HEK293 (cell line): ENCODE measurements at regions of chr2 and their contacts with region 1.

Region 1: GRCh38 chr2:177164584-177165052 is 48.0 kb upstream of the HNRNPA3 start:
- H3K4me3 ChIP-seq: peak overlapping the region; percentile 0; the same call in 1 of the 2 replicates
- H3K27ac ChIP-seq: no peak overlapping the region
- H3K4me1 ChIP-seq: peaks cover 9% of the 10 kb centered on the region
- CTCF ChIP-seq: peak; percentile 96

Region 2: GRCh38 chr2:177044671-177045070 is 119.9 kb before region 1 on chr2:
- CTCF ChIA-PET with region 1: no interaction called
- POLR2A ChIA-PET with region 1: no interaction called
- H3K4me3 ChIP-seq: no peak overlapping the region
- H3K27ac ChIP-seq: no peak overlapping the region
- H3K4me1 ChIP-seq: peaks cover under 1% of the 10 kb centered on the region; the same call in 1 of the 2 replicates
- CTCF ChIP-seq: no peak

Region 3: GRCh38 chr2:177138823-177139222 is 25.8 kb before region 1 on chr2:
- CTCF ChIA-PET with region 1: interaction called, 10 read pairs
- POLR2A ChIA-PET with region 1: no interaction called
- H3K4me3 ChIP-seq: no peak overlapping the region
- H3K27ac ChIP-seq: no peak overlapping the region
- H3K4me1 ChIP-seq: no peaks in the 10 kb centered on the region
- CTCF ChIP-seq: no peak

Region 4: GRCh38 chr2:177221534-177221933 is 56.9 kb after region 1 on chr2:
- CTCF ChIA-PET with region 1: interaction called, 10 read pairs
- POLR2A ChIA-PET with region 1: interaction called, 3 read pairs
- H3K4me3 ChIP-seq: no peak overlapping the region
- H3K27ac ChIP-seq: no peak overlapping the region
- H3K4me1 ChIP-seq: no peaks in the 10 kb centered on the region
- CTCF ChIP-seq: no peak

Region 5: DNA sequence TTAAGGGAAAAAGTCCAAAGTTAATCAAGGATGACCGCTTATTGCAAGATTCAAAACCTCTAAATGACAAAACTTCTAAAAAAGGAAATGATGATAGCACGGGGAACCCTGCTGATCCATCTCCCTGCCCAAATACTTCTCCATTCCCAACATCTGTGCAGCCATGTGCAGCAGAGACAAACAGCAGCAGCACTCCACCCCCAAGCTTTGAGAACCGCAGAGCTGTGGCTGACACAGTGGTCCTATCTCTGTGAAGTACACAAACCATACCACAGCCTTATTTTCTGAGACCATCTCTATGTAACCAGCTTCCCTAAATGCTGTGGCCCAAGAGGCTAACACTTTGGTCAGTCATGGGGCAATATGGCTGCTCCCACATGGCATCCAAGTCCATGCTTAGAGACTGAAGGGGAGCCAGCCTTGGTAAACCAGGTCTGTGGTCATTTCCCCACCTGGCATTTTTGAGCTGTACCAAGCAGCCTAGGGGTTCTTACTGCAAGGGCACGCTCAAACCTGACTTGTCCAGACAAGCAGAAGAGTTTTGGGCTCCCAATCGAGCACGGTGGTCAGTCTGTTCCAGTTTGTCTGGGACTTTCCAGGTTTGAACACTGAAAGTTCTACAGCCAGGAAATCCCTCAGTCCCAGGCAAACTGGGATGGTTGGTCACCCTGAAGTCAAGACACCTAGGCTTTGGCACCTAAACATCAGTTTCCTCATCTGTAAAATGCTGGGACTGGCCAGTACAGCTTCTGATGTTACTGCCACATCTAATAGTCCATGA is 117.0 kb after region 1 on chr2:
- CTCF ChIA-PET with region 1: interaction called, 10 read pairs
- POLR2A ChIA-PET with region 1: no interaction called
- H3K4me3 ChIP-seq: no peak overlapping the region
- H3K27ac ChIP-seq: no peak overlapping the region
- H3K4me1 ChIP-seq: no peaks in the 10 kb centered on the region
- CTCF ChIP-seq: no peak

Region 6: DNA sequence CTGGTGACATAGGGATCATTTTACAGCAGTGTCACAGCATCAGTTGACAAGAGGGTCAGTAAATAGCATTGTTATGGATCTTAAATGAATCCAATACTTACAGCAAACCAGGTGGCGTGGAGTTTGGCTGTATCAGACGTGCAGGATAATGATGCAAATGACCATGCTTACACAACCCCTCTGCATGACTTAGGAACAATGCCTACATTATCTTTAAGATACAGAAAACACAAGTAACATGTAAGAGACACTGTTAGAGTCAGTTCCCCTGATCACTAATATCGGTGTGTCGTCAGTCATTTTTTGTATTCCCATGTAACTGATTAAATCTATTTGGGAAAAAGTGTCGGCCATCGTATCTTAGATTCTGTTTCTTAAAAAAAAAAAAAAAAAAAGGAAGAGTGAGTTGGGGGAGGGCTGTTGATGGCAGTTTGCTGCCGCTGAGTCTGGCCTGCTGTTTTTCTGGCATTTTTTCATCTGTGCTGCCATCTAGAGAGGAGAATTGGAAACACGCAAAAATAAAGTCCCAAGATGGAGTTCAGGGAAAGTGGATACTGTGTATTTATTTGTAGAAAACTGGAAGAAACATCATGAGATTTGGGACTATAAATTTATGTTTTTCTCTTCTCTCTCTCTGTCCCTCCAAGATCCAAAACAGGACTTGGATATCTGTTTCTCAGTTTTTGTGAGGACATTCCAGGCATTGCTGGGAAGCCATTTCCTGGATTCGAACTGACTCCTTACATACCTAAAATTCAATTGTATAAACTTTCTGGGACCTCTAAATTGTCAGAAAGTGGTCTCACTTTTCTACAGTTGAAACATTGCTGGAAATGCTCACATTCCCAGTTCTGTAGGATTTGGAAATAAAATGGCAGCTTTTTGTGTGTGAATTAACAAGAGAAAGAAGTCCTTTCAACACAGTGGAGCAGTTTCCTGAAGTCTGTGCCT is 167.7 kb after region 1 on chr2:
- CTCF ChIA-PET with region 1: interaction called, 115 read pairs
- POLR2A ChIA-PET with region 1: no interaction called
- H3K4me3 ChIP-seq: no peak overlapping the region
- H3K27ac ChIP-seq: no peak overlapping the region
- H3K4me1 ChIP-seq: no peaks in the 10 kb centered on the region
- CTCF ChIP-seq: peak; percentile 72

Region 7: DNA sequence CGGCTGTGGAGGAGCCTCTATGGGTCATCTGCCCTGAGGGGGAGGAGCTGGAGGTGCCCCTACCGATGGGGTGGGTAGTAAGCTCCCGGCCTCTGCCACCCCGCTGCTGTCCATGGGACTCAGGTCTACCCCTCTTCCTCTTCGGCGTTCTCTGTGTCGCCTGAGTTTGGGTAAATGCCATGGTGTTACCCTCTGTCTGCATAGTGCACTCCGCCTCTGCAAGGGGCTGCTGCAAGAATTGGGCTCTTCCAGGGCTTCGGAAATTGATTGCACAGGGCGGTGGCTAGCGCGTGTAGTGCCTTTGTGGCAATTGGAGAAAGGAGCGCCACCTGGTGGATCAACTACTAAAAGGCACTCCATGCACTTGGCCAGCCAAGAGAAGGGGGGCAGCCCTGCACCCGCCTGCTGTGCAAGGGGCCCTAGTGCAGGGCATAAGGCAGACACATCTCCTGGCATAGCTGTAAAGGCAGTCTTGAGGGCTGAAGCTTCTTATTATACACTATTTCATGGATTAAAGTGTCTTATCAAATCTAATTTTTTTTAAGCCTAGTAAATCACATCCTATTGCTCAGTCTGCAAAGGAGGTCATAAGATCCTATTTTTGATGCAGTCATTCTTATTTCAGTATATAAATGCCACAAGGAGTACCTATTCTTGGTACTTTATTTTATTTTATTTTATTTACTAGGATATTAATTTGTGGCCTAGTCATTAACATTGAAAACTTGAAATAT is 599.1 kb after region 1 on chr2:
- CTCF ChIA-PET with region 1: interaction called, 14 read pairs
- POLR2A ChIA-PET with region 1: no interaction called
- H3K4me3 ChIP-seq: no peak overlapping the region
- H3K27ac ChIP-seq: no peak overlapping the region
- H3K4me1 ChIP-seq: no peaks in the 10 kb centered on the region; the same call in 1 of the 2 replicates
- CTCF ChIP-seq: peak; percentile 85